Activated CD4-positive, alpha-beta T cell treated with anti-CD3 and anti-CD28 coated beads, Interleukin-2, amount 10 ng/mL, durations not matched to agents 7 days and 5 days (primary cell): ENCODE measurements at regions of chr17 and their contacts with region 1.

Region 1: DNA sequence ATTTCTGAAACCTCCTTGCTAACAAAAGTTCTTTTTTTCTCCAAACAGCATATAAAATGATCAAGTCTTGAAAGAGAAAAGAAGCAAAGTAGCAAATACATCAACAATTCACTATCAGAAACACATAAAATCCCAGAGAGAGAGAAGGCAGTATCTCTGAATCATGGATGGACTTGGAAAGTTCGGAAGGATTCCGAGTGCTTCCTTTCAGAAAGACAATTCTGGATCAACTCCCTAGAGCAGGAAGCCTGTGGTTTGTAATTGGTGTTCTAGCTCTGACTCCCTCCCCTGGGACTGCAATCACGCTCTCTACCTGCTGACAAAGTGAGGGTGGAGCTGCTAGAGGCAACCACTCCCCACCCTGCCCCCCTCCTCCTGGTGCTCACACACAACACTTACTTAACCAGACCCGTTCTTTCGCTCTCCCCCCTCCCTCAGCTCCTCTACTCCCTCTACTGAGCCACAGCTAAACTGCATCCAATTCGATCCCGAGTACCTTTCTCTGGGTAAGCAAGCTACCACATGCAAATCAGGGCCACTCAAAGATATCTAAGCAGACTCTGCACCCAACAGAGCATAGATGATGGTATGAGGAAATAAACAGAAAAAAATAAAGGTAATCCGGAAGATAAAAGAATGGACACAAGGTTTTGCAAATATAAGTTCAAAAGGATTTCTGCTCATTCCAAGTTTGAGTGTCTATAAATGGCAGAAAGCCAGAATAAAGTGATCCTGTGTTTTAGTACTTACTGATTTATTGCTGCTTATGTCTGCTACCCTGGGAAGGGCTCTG is at the start of gene RNF43:
- DNase-seq: peak; percentile 91
- H3K4me3 Mint-ChIP-seq: no peak within 1 kb of the TSS
- H3K27ac Mint-ChIP-seq: peak within 1 kb of the TSS; percentile 50
- H3K4me1 Mint-ChIP-seq: peaks cover 26% of the 10 kb centered on the region
- H3K27me3 Mint-ChIP-seq: no peaks in the 10 kb centered on the region
- total RNA-seq, gene RNF43: 0.07 to 0.12 TPM

Region 2: GRCh38 chr17:58329035-58329809 is 88.3 kb before region 1 on chr17:
- CTCF ChIA-PET with region 1: interaction called, 6 read pairs
- POLR2A ChIA-PET with region 1: interaction called, 13 read pairs
- DNase-seq: peak; percentile 86
- H3K4me3 Mint-ChIP-seq: peak overlapping the region; percentile 93
- H3K27ac Mint-ChIP-seq: peak overlapping the region; percentile 99
- H3K4me1 Mint-ChIP-seq: peaks cover 36% of the 10 kb centered on the region
- H3K27me3 Mint-ChIP-seq: peaks cover 4% of the 10 kb centered on the region

Region 3: GRCh38 chr17:58501451-58501850 is 84.0 kb after region 1 on chr17:
- CTCF ChIA-PET with region 1: no interaction called
- POLR2A ChIA-PET with region 1: no interaction called
- DNase-seq: no peak
- H3K4me3 Mint-ChIP-seq: no peak overlapping the region
- H3K27ac Mint-ChIP-seq: no peak overlapping the region
- H3K4me1 Mint-ChIP-seq: peaks cover 9% of the 10 kb centered on the region
- H3K27me3 Mint-ChIP-seq: no peaks in the 10 kb centered on the region